ENCODE measurements at regions of chr20 and their contacts with region 1.

Region 1: GRCh38 chr20:35680452-35681183 is 15.9 kb upstream of the CPNE1 start:
- DNase-seq: no peak
- ATAC-seq: no peak
- H3K4me3 ChIP-seq: no peak overlapping the region
- H3K27ac ChIP-seq: no peak overlapping the region
- H3K4me1 ChIP-seq: no peaks in the 10 kb centered on the region
- H3K27me3 ChIP-seq: no peaks in the 10 kb centered on the region
- CTCF ChIP-seq: no peak
- POLR2A ChIP-seq: no peak
- RAD21 ChIP-seq: no peak

Region 2: DNA sequence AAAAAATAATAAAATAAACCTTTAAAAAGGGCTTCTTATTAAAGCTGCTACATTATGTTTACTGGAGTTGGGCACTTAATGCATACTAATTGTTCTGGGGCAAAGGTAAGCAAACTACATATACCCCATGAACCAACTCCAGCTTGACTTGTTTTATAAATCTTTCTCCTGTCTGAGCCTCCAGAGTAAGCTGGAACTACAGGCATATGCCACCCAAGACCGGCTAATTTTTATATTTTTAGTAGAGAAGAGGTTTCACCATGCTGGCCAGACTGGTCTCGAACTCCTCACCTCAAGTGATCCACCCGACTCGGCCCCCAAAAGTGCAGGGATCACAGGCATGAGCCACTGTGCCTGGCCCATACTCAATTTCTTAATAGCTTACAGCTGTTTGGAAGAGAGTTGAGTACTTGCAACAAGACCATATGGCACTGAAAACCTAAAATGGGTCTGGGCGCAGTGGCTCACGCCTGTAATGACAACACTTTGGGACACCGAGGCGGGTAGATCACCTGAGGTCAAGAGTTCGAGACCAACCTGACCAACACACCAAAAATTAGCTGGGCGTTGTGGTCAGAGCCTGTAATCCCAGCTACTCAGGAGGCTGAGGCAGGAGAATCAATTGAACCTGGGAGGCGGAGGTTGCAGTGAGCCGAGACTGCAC is 38.5 kb after region 1 on chr20:
- CTCF ChIA-PET with region 1: no interaction called
- POLR2A ChIA-PET with region 1: no interaction called
- RAD21 ChIA-PET with region 1: no interaction called
- intact Hi-C with region 1: loop called (anchors 1 kb)
- DNase-seq: no peak
- ATAC-seq: no peak
- H3K4me3 ChIP-seq: no peak overlapping the region
- H3K27ac ChIP-seq: no peak overlapping the region
- H3K4me1 ChIP-seq: no peaks in the 10 kb centered on the region
- H3K27me3 ChIP-seq: no peaks in the 10 kb centered on the region
- CTCF ChIP-seq: no peak
- POLR2A ChIP-seq: no peak
- RAD21 ChIP-seq: no peak

Measured in HCT116 (cell line).